HEK293 (cell line): ENCODE measurements at regions of chr13 and their contacts with region 1.

Region 1: DNA sequence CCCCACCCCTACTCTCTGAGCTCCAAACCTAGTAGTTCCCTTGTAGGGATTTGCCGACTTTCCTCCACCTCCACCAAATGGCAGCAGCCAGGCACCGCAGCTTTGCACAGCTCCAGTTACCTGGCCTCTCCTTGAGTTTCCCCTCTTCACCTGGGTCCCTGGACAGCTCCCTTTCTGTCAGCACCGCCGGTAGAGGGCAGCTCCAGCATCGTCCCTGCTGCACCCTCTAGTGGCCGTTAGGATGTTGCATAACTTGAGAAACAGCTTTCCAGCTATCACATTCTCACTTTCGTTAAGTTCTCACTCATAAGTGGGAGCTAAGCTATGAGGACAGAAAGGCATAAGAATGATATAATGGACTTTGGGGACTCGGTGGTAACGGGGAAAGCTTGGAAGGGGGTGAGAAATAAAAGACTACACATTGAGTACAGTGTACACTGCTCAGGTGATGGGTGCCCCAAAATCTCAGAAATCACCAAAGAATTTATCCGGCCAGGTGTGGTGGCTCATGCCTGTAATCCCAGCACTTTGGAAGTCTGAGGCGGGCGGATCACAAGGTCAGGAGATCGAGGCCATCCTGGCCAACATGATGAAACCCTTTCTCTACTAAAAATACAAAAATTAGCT is 60.4 kb upstream of the OLFM4 start:
- H3K4me3 ChIP-seq: no peak overlapping the region
- H3K27ac ChIP-seq: no peak overlapping the region
- H3K4me1 ChIP-seq: no peaks in the 10 kb centered on the region
- CTCF ChIP-seq: peak; percentile 92

Region 2: DNA sequence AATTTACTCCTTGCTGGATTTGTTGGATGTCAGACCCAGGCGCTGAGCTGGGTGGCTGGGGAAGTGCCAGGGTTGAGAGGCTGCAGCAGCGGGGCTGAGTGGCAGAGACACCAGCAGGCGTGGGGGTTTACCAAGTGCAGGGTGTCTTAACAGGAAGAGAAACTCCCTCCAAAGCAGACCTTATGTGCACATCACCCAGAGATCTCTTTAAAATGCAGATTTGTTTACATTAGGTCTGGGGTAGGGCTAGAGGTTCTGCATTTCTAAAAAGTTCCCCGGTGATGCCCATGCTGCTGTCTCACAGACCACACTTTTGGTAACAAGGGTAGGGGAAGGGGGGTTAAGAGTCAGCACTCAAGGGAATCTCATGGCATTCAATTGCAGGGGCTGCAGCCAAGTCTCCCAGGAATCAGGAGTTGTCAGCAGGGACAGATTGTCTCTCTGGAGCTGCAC is 20.2 kb before region 1 on chr13:
- CTCF ChIA-PET with region 1: interaction called, 12 read pairs
- POLR2A ChIA-PET with region 1: no interaction called
- H3K4me3 ChIP-seq: no peak overlapping the region
- H3K27ac ChIP-seq: no peak overlapping the region
- H3K4me1 ChIP-seq: no peaks in the 10 kb centered on the region
- CTCF ChIP-seq: no peak

Region 3: DNA sequence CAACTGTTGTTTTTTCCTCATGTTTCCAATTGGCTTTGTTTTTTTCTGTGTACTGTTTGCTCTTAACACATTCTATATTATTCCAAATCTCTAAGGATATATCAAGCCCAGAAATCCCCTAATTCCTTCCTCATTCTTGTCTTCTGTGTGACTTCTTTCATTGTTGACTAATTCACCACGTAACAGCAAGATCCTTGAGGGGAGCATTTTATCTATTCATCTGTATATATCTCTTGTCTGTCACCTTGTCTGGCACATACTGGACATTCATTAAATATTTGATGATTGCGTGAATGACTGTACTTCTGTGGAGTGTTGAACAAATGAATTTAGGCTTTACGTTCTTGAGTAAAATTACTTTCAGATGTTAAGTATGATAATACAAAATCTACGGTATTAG is 15.6 kb after region 1 on chr13:
- CTCF ChIA-PET with region 1: interaction called, 28 read pairs
- POLR2A ChIA-PET with region 1: no interaction called
- H3K4me3 ChIP-seq: no peak overlapping the region
- H3K27ac ChIP-seq: no peak overlapping the region
- H3K4me1 ChIP-seq: no peaks in the 10 kb centered on the region
- CTCF ChIP-seq: no peak

Region 4: GRCh38 chr13:53151336-53152056 is 183.3 kb after region 1 on chr13:
- CTCF ChIA-PET with region 1: interaction called, 33 read pairs
- POLR2A ChIA-PET with region 1: no interaction called
- H3K4me3 ChIP-seq: no peak overlapping the region
- H3K27ac ChIP-seq: no peak overlapping the region
- H3K4me1 ChIP-seq: no peaks in the 10 kb centered on the region
- CTCF ChIP-seq: peak; percentile 64; the same call in 1 of the 2 replicates